ENCODE measurements at regions of chr4 and their contacts with region 1.

Region 1: GRCh38 chr4:125049711-125050110 is 265.0 kb upstream of the FAT4 start:
- DNase-seq: no peak
- ATAC-seq: no peak
- H3K4me3 ChIP-seq: no peak overlapping the region
- H3K27ac ChIP-seq: no peak overlapping the region
- H3K4me1 ChIP-seq: no peaks in the 10 kb centered on the region
- H3K27me3 ChIP-seq: no peaks in the 10 kb centered on the region

Region 2: DNA sequence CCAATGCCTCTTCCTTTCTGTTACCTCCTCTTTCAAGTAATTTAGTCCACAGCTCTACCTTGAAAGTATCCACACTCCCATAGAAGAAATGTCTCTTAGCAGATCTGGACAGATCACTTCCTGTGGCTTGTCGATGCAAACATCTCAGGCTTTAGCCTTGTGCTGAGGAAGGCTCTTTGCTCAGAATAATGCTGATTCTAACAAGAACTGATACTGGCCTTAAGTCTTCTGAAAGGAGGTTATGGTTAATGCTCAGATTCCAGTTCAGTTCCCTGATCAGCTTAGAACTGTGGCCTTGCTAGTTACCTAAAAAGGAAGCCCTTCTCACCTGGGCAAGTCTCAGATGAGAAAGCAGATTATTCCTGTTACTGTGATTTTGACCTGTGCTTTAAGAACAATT is 34.9 kb after region 1 on chr4:
- intact Hi-C with region 1: loop called in 1 of 2 experiments (anchors 2 kb)
- DNase-seq: no peak
- ATAC-seq: no peak
- H3K4me3 ChIP-seq: no peak overlapping the region
- H3K27ac ChIP-seq: no peak overlapping the region
- H3K4me1 ChIP-seq: peaks cover 0 to 2% of the 10 kb centered on the region in 2 donors
- H3K27me3 ChIP-seq: no peaks in the 10 kb centered on the region